GM10248 (cell line): ENCODE measurements at regions of chr5 and their contacts with region 1.

Region 1: DNA sequence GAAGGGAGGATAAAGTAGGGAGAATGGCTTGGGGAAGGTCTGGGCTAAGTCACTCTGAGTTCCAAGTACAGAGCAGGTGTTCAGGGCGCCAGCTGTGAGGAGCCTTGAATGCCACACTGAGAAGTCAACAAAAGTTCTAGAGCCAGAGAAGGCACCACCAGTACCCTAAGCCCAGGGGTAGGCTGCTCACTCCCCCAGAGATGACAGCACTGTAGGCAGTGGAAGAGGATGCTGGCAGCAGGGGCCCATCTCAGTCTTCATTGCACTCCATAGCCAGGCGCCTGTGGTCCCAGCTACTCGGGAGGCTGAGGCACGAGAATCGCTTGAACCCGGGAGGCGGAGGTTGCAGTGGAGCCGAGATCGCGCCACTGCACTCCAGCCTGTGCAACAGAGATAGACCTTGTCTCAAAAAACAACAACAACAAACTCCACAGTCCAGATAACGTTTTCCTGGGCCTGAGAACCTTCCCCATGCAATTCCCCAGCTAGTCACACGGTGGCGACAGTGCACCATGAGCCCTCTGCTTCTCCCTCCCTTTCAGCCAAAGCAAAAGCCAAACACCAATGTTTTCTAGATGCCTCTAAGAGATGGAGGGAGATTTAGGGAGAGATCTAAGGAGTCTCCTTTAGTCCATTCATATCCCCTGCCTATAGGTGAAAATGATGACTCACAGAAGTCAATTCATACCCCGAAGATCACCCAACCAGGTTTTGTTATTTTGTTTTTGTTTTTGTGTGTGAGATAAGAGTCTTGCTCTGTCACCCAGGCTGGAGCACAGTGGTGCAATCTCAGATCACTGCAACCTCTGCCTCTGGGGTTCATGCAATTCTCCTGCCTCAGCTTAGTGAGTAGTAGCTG is 19.8 kb upstream of the NSD1 start:
- DNase-seq: peak; percentile 91
- CTCF ChIP-seq: peak; percentile 97

Region 2: GRCh38 chr5:177071666-177072385 is 42.0 kb before region 1 on chr5:
- CTCF ChIA-PET with region 1: interaction called, 112 read pairs
- POLR2A ChIA-PET with region 1: no interaction called
- DNase-seq: peak; percentile 75
- CTCF ChIP-seq: peak; percentile 88

Region 3: GRCh38 chr5:177098470-177099141 is 15.2 kb before region 1 on chr5:
- CTCF ChIA-PET with region 1: interaction called, 16 read pairs
- POLR2A ChIA-PET with region 1: no interaction called
- DNase-seq: no peak
- CTCF ChIP-seq: no peak

Region 4: GRCh38 chr5:177300236-177300880 is 186.6 kb after region 1 on chr5:
- CTCF ChIA-PET with region 1: interaction called, 18 read pairs
- POLR2A ChIA-PET with region 1: no interaction called
- DNase-seq: peak; percentile 58
- CTCF ChIP-seq: no peak

Region 5: GRCh38 chr5:177362610-177363507 is 249.1 kb after region 1 on chr5:
- CTCF ChIA-PET with region 1: interaction called, 10 read pairs
- POLR2A ChIA-PET with region 1: no interaction called
- DNase-seq: peak; percentile 86
- CTCF ChIP-seq: no peak

Region 6: DNA sequence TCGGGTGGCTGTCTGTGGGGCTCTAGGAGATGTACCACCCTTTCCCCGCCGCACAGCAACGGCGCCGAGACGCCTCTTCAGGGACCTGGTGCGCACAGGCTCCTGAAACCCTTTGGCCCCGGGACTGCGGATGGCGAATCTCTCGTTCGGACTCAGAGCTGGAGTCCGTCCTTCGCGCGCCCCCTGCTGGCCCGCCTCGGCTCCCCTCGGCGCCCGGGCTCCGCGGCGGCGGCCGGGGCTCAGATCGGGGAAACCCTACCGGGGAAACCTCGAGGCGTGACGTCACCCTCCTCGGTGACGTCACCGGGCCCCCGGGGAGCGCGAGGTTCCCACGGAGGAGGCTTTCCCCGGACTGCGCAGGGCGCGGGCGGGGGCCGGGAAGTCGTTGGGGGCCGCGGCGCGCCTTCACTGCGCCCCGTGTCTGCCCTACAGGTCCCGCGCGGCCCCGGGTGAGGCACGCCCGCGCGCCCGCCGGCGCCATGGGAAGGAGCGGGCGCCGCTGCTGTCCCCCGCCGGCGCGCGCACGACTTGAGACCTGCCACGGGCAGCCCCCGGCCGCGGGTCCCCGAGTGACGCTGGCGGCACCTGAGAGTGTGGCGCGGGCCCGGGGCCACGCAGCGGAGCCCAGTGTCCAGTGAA is 340.7 kb after region 1 on chr5:
- CTCF ChIA-PET with region 1: interaction called, 36 read pairs
- POLR2A ChIA-PET with region 1: no interaction called
- DNase-seq: peak; percentile 95
- CTCF ChIP-seq: peak; percentile 90